CD4-positive, alpha-beta memory T cell (primary cell): ENCODE measurements at regions of chr17 and their contacts with region 1.

Region 1: GRCh38 chr17:2386400-2387085 is 14.3 kb downstream of the MNT start:
- DNase-seq: peak in 1 of 5 donors; percentile 12
- H3K4me3 ChIP-seq: no peak overlapping the region
- H3K4me3 Mint-ChIP-seq: no peak overlapping the region
- H3K27ac ChIP-seq: no peak overlapping the region
- H3K27ac Mint-ChIP-seq: peak overlapping the region in 1 of 7 donors; percentile 46
- H3K4me1 ChIP-seq: peaks cover 22% of the 10 kb centered on the region
- H3K4me1 Mint-ChIP-seq: peaks cover 11 to 46% (median 21%) of the 10 kb centered on the region in 4 donors
- H3K27me3 ChIP-seq: no peaks in the 10 kb centered on the region
- H3K27me3 Mint-ChIP-seq: no peaks in the 10 kb centered on the region

Region 2: DNA sequence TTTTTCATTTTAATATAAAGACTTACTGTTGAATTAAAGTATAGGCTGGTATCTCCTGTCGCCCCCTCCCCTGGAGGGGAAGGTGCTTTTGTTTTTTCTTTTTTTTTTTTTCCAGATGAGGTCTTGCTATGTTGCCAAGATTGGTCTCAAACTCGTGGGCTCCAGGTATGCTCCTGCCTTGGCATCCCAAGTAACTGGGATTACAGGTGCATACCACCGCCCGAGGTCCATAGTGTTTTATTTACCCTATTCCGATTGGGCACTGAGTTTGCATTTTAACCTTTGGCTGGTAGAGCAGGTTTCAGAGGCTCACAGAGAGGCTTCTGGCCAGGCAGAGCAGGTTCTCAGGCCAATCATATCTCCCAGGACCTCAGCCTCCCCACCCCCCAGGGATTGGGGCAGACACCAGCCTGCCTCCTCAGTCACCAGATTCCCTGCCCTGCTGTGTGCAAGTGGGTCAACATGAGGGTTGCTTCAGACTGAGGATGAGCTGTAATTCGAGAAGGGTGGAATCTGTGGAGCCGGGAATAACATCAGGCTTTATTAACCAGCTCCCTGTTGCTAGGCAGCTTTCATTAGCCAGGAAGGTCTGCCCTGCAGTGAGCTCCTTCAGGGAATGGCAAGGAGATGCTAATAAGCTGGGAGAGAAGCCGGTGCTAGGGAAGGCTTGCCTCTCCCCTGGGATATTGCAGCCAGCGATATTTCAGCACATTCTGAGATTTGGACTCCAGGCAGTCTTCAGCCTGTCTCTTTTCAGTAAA is 38.8 kb before region 1 on chr17:
- CTCF ChIA-PET with region 1: interaction called, 14 read pairs
- POLR2A ChIA-PET with region 1: no interaction called
- intact Hi-C with region 1: no loop called
- DNase-seq: no peak
- H3K4me3 ChIP-seq: no peak overlapping the region
- H3K4me3 Mint-ChIP-seq: no peak overlapping the region
- H3K27ac ChIP-seq: no peak overlapping the region
- H3K27ac Mint-ChIP-seq: no peak overlapping the region
- H3K4me1 ChIP-seq: peaks cover 9% of the 10 kb centered on the region
- H3K4me1 Mint-ChIP-seq: peaks cover 1 to 16% (median 12%) of the 10 kb centered on the region in 4 donors
- H3K27me3 ChIP-seq: no peaks in the 10 kb centered on the region
- H3K27me3 Mint-ChIP-seq: no peaks in the 10 kb centered on the region

Region 3: GRCh38 chr17:2401426-2402221 is 15.1 kb after region 1 on chr17:
- CTCF ChIA-PET with region 1: interaction called, 30 read pairs
- POLR2A ChIA-PET with region 1: interaction called, 146 read pairs
- intact Hi-C with region 1: loop called (anchors 1 kb)
- DNase-seq: peak; percentile 99 to 100 (median 100)
- H3K4me3 ChIP-seq: peak overlapping the region; percentile 65 to 89
- H3K4me3 Mint-ChIP-seq: peak overlapping the region; percentile 90 to 100 (median 98)
- H3K27ac ChIP-seq: peak overlapping the region; percentile 95
- H3K27ac Mint-ChIP-seq: peak overlapping the region; percentile 99 to 100 (median 100)
- H3K4me1 ChIP-seq: peaks cover 35% of the 10 kb centered on the region
- H3K4me1 Mint-ChIP-seq: peaks cover 18 to 54% (median 33%) of the 10 kb centered on the region in 4 donors
- H3K27me3 ChIP-seq: no peaks in the 10 kb centered on the region
- H3K27me3 Mint-ChIP-seq: peaks cover 0 to 8% of the 10 kb centered on the region in 2 donors

Region 4: GRCh38 chr17:2416010-2416734 is 29.6 kb after region 1 on chr17:
- CTCF ChIA-PET with region 1: interaction called, 558 read pairs
- POLR2A ChIA-PET with region 1: interaction called, 78 read pairs
- intact Hi-C with region 1: loop called (anchors 1 kb)
- DNase-seq: peak; percentile 78 to 84 (median 81)
- H3K4me3 ChIP-seq: no peak overlapping the region
- H3K4me3 Mint-ChIP-seq: no peak overlapping the region
- H3K27ac ChIP-seq: no peak overlapping the region
- H3K27ac Mint-ChIP-seq: peak overlapping the region in 6 of 7 donors; percentile 47 to 91 (median 75)
- H3K4me1 ChIP-seq: no peaks in the 10 kb centered on the region
- H3K4me1 Mint-ChIP-seq: peaks cover 0 to 10% (median 0%) of the 10 kb centered on the region in 4 donors
- H3K27me3 ChIP-seq: no peaks in the 10 kb centered on the region
- H3K27me3 Mint-ChIP-seq: no peaks in the 10 kb centered on the region